ENCODE measurements at regions of chr2 and their contacts with region 1.

Region 1: GRCh38 chr2:53353135-53354114 is 414.2 kb upstream of the CHAC2 start:
- DNase-seq: peak; percentile 67
- ATAC-seq: peak; percentile 85
- H3K4me3 ChIP-seq: no peak overlapping the region
- H3K27ac ChIP-seq: peak overlapping the region; percentile 80
- H3K4me1 ChIP-seq: peaks cover 12% of the 10 kb centered on the region
- H3K27me3 ChIP-seq: no peaks in the 10 kb centered on the region
- CTCF ChIP-seq: no peak

Region 2: GRCh38 chr2:53403792-53404413 is 50.5 kb after region 1 on chr2:
- CTCF ChIA-PET with region 1: no interaction called
- POLR2A ChIA-PET with region 1: no interaction called
- intact Hi-C with region 1: loop called (anchors 2 kb)
- DNase-seq: peak; percentile 94
- ATAC-seq: peak; percentile 95
- H3K4me3 ChIP-seq: peak overlapping the region; percentile 37; the same call in 1 of the 2 replicates
- H3K27ac ChIP-seq: peak overlapping the region; percentile 97
- H3K4me1 ChIP-seq: peaks cover 64% of the 10 kb centered on the region
- H3K27me3 ChIP-seq: no peaks in the 10 kb centered on the region
- CTCF ChIP-seq: no peak

Region 3: GRCh38 chr2:54009549-54009948 is 656.1 kb after region 1 on chr2:
- CTCF ChIA-PET with region 1: no interaction called
- POLR2A ChIA-PET with region 1: no interaction called
- intact Hi-C with region 1: no loop called
- DNase-seq: no peak
- ATAC-seq: no peak
- H3K4me3 ChIP-seq: no peak overlapping the region
- H3K27ac ChIP-seq: no peak overlapping the region
- H3K4me1 ChIP-seq: no peaks in the 10 kb centered on the region
- H3K27me3 ChIP-seq: no peaks in the 10 kb centered on the region
- CTCF ChIP-seq: no peak